ENCODE measurements at regions of chr18 and their contacts with region 1.

Region 1: GRCh38 chr18:616380-616995 is 19.7 kb downstream of the CLUL1 start:
- DNase-seq: no peak
- H3K4me3 ChIP-seq: no peak overlapping the region
- H3K27ac ChIP-seq: no peak overlapping the region
- H3K4me1 ChIP-seq: no peaks in the 10 kb centered on the region
- H3K27me3 ChIP-seq: no peaks in the 10 kb centered on the region
- CTCF ChIP-seq: peak; percentile 21 to 71 (median 49)
- EP300 ChIP-seq: no peak
- POLR2A ChIP-seq: no peak

Region 2: DNA sequence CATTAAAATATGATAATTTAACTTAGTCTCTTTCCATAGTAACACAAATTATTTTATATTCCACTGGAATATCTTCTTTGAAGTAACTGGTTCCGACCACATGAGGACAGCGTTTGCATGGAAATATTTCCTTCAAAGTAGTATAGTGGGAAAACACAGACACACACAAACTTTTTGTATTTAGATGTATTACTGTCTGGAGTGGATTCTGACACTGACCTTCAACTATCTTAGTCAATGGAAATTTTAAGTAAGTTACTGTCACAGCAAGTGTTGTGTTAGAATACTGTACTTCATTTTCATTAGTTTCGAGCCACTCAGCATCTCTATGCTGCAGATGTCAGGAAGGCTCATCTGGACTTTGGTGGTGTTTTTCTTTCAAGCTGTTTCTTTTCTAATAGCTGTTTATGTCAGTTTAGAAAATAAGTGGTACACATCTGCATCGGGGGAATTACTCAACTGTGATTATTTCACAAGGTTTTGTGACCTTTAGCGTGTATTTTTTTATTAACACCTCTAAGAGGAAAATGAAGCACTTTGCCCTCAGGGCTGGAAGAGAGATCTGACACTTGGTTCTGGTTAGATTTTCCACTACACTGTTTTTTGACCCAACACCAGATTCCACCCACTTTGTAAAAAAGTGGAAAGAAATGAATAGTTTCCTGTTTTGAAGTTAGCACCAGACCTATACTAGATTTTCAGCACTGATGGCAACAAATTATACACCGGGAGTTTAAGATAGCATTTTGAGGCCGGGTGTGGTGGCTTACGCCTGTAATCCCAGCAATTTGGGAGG is 329.8 kb before region 1 on chr18:
- intact Hi-C with region 1: loop called (anchors 5 to 10 kb)
- DNase-seq: no peak
- H3K4me3 ChIP-seq: no peak overlapping the region
- H3K27ac ChIP-seq: no peak overlapping the region
- H3K4me1 ChIP-seq: no peaks in the 10 kb centered on the region
- H3K27me3 ChIP-seq: no peaks in the 10 kb centered on the region
- CTCF ChIP-seq: peak in 2 of 3 donors; percentile 37 to 67
- EP300 ChIP-seq: no peak
- POLR2A ChIP-seq: no peak

Region 3: GRCh38 chr18:658001-658946 is 41.8 kb after region 1 on chr18:
- intact Hi-C with region 1: no loop called
- DNase-seq: peak; percentile 75 to 88 (median 81)
- H3K4me3 ChIP-seq: peak overlapping the region; percentile 59
- H3K27ac ChIP-seq: no peak overlapping the region
- H3K4me1 ChIP-seq: peaks cover 3% of the 10 kb centered on the region
- H3K27me3 ChIP-seq: no peaks in the 10 kb centered on the region
- CTCF ChIP-seq: no peak
- EP300 ChIP-seq: no peak
- POLR2A ChIP-seq: no peak

Measured in ovary (tissue), 10 donors.